Caco-2 (cell line): ENCODE measurements at regions of chr3 and their contacts with region 1.

Region 1: DNA sequence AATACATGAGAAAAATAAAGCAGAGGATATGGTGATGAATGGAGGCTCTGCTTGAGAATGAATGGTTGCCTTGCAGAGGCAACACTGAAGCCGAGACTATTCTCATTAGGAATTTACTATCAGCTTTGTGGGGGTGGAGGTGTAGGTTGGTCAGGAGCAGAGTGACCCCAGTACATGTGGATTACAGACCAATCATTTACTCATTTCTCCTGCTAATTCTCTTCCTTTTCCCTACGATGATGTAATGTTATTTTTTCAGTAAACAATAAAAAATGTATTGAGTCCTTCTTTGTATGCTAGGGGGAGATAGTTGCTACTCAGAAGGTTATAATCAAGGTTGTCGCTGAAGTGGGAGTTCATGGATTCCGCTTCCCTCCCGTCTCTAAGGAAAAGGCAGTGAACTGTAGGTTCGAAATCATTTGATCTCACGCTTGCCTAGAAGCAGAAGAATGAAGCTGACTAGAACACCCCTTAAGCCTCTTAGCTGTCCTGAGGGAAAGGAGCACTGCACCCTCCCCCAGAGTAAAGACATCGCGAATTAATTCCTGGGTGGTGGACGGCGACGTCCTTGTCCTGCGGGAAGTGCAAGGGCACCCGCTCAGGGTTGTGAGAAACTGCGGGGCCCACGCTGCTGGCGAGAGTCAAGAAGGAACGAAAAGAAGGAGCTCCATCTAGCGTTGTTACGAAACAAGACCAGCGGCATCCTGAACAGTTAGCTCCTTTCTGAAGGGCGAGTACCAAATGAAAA is 213.2 kb upstream of the PFN2 start:
- DNase-seq: peak; percentile 64 to 71
- H3K4me3 ChIP-seq: peak overlapping the region; percentile 32
- H3K4me3 Mint-ChIP-seq: no peak overlapping the region
- H3K27ac Mint-ChIP-seq: no peak overlapping the region
- H3K4me1 ChIP-seq: peaks cover 20% of the 10 kb centered on the region
- H3K4me1 Mint-ChIP-seq: peaks cover 15% of the 10 kb centered on the region
- H3K27me3 ChIP-seq: no peaks in the 10 kb centered on the region
- H3K27me3 Mint-ChIP-seq: no peaks in the 10 kb centered on the region
- CTCF ChIP-seq: peak; percentile 61

Region 2: DNA sequence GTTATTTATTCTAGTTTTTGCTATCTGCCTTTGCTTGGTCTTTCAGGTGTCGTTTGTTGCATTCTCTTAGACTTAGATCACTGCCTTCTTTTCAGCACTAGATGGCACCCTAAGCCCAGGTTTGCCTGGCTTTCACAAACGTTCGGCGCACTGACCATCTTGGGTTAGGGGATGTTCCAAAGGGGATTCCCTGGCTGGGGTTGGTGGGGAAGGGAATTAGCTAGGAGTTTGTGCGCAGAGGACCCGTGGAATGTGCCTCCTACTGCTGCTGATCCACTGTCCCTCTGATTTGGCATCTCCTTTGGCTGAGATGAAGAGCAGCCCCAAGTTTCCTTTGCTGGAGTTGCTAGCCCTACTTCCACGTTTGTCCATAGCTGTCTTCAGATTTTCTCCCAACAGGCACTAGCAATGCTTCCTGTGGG is 247.0 kb before region 1 on chr3:
- CTCF ChIA-PET with region 1: interaction called, 10 read pairs
- POLR2A ChIA-PET with region 1: no interaction called
- intact Hi-C with region 1: loop called (anchors 1 kb)
- DNase-seq: peak; percentile 56 to 60
- H3K4me3 ChIP-seq: no peak overlapping the region
- H3K4me3 Mint-ChIP-seq: no peak overlapping the region
- H3K27ac Mint-ChIP-seq: no peak overlapping the region
- H3K4me1 ChIP-seq: no peaks in the 10 kb centered on the region
- H3K4me1 Mint-ChIP-seq: peaks cover 16% of the 10 kb centered on the region
- H3K27me3 ChIP-seq: no peaks in the 10 kb centered on the region
- H3K27me3 Mint-ChIP-seq: no peaks in the 10 kb centered on the region
- CTCF ChIP-seq: peak; percentile 85

Region 3: GRCh38 chr3:149969940-149970715 is 213.7 kb before region 1 on chr3:
- CTCF ChIA-PET with region 1: interaction called, 22 read pairs
- POLR2A ChIA-PET with region 1: no interaction called
- intact Hi-C with region 1: loop called (anchors 1 kb)
- DNase-seq: peak; percentile 77 to 84
- H3K4me3 ChIP-seq: peak overlapping the region; percentile 91
- H3K4me3 Mint-ChIP-seq: peak overlapping the region; percentile 78
- H3K27ac Mint-ChIP-seq: peak overlapping the region; percentile 84
- H3K4me1 ChIP-seq: no peaks in the 10 kb centered on the region
- H3K4me1 Mint-ChIP-seq: no peaks in the 10 kb centered on the region
- H3K27me3 ChIP-seq: no peaks in the 10 kb centered on the region
- H3K27me3 Mint-ChIP-seq: peaks cover 3% of the 10 kb centered on the region
- CTCF ChIP-seq: no peak

Region 4: GRCh38 chr3:150040097-150040496 is 143.8 kb before region 1 on chr3:
- CTCF ChIA-PET with region 1: no interaction called
- POLR2A ChIA-PET with region 1: no interaction called
- intact Hi-C with region 1: loop called (anchors 5 kb)
- DNase-seq: no peak
- H3K4me3 ChIP-seq: no peak overlapping the region
- H3K4me3 Mint-ChIP-seq: no peak overlapping the region
- H3K27ac Mint-ChIP-seq: no peak overlapping the region
- H3K4me1 ChIP-seq: peaks cover 5% of the 10 kb centered on the region
- H3K4me1 Mint-ChIP-seq: no peaks in the 10 kb centered on the region
- H3K27me3 ChIP-seq: no peaks in the 10 kb centered on the region
- H3K27me3 Mint-ChIP-seq: peaks cover 5% of the 10 kb centered on the region
- CTCF ChIP-seq: no peak

Region 5: DNA sequence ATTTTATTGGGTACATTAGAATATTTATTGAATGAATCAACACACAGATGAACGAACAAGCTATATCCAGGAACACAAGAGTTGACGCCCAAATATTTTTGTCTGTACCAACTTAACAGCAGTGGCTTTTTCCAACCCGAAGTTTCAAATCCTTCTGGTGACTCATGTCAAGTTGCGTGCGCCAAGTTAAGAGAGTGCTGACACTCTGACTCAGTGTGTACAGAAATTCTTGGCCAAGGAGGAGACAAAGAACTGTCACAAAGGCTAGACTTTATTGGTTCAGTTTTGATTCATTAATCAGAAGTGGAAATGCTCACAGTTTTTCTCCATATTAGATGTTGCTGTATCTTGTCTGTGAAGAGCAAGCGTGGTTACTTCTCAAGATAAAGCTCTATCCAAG is 164.6 kb after region 1 on chr3:
- CTCF ChIA-PET with region 1: no interaction called
- POLR2A ChIA-PET with region 1: no interaction called
- intact Hi-C with region 1: no loop called
- DNase-seq: no peak
- H3K4me3 ChIP-seq: no peak overlapping the region
- H3K4me3 Mint-ChIP-seq: no peak overlapping the region
- H3K27ac Mint-ChIP-seq: peak overlapping the region; percentile 70
- H3K4me1 ChIP-seq: peaks cover 52% of the 10 kb centered on the region
- H3K4me1 Mint-ChIP-seq: peaks cover 40% of the 10 kb centered on the region
- H3K27me3 ChIP-seq: no peaks in the 10 kb centered on the region
- H3K27me3 Mint-ChIP-seq: no peaks in the 10 kb centered on the region
- CTCF ChIP-seq: no peak